Breast epithelium (tissue), 4 donors: ENCODE measurements at regions of chr2 and their contacts with region 1.

Region 1: DNA sequence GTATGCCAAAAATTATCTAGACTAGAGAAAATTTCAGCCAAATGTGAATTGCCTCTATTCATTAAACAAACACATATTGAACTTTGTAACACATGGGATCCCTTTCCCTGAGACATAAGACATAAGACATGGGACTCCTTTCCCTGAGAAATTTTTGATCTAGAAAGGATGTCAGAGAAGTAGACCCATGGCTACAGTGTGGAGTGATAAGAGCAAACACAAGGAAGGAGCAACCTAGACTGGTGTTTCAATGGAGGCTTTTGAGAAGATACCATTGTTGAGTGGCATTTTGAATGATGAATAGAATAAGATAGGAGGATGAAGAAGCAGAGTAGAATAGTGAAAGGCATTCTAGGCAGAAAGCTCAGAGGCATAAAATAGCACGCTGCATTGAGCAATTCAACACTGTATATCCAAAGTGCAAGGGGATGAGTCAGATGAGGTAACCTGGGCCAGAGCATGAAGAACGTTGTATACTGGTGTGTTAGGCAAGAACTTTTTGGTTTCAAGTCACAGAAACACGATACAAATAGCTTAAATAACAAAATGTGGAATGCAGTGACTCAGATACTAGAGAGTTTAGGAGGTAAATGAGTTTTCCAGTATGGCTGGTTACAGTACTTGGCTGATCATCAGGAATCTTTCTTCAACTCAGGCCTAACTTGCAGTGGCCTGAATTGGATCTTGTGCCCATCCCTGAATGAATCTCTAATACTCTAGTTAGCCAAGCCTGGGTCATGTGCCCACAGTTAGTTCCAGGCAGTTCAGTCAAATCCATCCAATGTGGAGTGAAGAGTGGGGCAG is 129.8 kb upstream of the TANK start:
- DNase-seq: peak in 1 of 2 donors; percentile 21
- H3K4me3 ChIP-seq: no peak overlapping the region
- H3K27ac ChIP-seq: peak overlapping the region; percentile 43 to 52
- H3K4me1 ChIP-seq: no peaks in the 10 kb centered on the region
- H3K27me3 ChIP-seq: no peaks in the 10 kb centered on the region
- CTCF ChIP-seq: no peak
- POLR2A ChIP-seq: no peak

Region 2: DNA sequence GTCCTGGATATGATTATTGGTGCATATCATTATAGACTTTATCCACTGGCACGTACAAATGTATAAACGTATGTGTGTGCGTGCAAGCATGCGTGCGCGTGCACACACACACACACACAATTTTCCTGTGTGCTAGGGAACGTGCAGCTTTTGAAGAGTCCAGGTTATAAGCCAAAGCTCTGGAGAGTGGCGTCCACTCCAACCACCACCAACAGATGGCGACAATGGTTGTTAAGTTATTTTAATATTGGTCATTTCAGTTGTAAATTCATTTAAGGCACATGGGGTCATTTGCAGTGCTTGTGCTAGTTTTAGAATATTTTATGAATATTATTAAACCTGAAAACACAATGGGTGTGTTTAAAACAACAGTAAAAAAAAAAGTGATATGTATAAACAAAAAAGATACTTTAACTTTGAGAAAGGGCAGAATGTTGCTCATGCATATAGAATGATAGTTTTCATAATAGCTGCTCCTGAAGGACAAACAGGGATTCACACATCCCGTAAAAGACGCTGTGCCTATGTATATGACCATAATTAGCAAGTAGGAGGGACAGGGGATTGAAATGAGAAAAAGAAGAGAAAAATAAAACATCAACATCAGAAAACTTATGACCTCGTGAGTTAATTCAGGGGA is 706.2 kb before region 1 on chr2:
- intact Hi-C with region 1: no loop called
- DNase-seq: no peak
- H3K4me3 ChIP-seq: no peak overlapping the region
- H3K27ac ChIP-seq: no peak overlapping the region
- H3K4me1 ChIP-seq: no peaks in the 10 kb centered on the region
- H3K27me3 ChIP-seq: no peaks in the 10 kb centered on the region
- CTCF ChIP-seq: peak; percentile 36 to 61 (median 59)
- POLR2A ChIP-seq: no peak

Region 3: DNA sequence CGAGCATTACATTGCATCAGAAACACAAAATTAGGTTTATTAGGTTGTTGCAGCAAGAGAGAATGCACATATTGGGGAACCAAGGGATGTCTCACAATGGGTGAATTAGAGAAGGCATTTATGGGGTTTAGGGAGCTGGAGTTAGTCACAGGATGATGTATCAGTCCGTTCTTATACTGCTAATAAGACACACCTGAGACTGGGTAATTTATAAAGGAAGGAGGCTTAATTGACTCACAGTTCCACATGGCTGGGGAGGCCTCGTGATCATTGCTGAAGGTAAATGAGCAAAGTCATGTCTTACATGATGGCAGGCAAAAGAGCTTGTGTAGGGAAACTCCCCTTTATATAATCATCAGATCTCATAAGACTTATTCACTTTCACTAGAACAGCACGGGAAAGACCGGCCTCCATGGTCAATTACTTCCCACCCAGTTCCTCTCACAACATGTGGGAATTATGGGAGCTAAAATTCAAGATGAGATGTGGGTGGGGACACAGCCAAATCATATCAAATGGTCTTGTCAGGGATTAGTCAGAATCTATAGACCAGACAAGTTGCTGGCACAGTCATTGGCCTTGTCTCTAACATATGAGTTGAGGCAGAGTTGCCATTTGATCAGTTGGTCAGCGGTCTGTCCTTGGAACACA is 474.9 kb before region 1 on chr2:
- intact Hi-C with region 1: loop called (anchors 5 kb)
- DNase-seq: no peak
- H3K4me3 ChIP-seq: no peak overlapping the region
- H3K27ac ChIP-seq: no peak overlapping the region
- H3K4me1 ChIP-seq: no peaks in the 10 kb centered on the region
- H3K27me3 ChIP-seq: no peaks in the 10 kb centered on the region
- CTCF ChIP-seq: no peak
- POLR2A ChIP-seq: no peak